ENCODE measurements at regions of chr12 and their contacts with region 1.

Region 1: DNA sequence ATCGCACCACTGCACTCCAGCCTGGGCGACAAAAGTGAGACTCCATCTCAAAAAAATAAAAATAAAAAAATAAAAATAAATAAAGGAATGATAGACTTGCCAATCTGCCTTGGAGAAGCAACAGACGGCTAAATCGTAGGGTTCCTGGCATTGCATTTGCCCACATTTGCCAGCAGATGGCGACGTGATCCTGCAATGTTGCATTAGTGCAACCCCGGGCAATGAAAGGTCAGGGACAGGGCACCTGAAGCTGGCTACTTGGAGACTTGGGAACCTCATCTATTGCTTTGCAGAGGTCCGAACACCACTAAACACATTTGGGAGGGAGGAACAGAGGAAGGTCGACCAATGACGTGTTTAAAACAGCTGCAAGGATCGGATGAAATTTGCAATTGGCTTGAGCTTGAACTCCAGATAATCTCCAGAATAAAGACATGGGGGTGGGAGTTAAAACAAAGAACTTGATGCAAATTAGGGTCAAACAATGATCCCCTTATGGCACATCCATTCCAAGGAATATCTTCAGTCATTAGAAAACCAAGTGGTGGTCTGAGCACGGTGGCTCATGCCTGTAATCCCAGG is 34.6 kb downstream of the SPRING1 start:
- DNase-seq: peak; percentile 46
- H3K4me3 ChIP-seq: no peak overlapping the region
- H3K27ac ChIP-seq: no peak overlapping the region
- H3K4me1 ChIP-seq: no peaks in the 10 kb centered on the region
- H3K27me3 ChIP-seq: no peaks in the 10 kb centered on the region
- CTCF ChIP-seq: peak; percentile 54 to 88 (median 86)
- POLR2A ChIP-seq: no peak

Region 2: DNA sequence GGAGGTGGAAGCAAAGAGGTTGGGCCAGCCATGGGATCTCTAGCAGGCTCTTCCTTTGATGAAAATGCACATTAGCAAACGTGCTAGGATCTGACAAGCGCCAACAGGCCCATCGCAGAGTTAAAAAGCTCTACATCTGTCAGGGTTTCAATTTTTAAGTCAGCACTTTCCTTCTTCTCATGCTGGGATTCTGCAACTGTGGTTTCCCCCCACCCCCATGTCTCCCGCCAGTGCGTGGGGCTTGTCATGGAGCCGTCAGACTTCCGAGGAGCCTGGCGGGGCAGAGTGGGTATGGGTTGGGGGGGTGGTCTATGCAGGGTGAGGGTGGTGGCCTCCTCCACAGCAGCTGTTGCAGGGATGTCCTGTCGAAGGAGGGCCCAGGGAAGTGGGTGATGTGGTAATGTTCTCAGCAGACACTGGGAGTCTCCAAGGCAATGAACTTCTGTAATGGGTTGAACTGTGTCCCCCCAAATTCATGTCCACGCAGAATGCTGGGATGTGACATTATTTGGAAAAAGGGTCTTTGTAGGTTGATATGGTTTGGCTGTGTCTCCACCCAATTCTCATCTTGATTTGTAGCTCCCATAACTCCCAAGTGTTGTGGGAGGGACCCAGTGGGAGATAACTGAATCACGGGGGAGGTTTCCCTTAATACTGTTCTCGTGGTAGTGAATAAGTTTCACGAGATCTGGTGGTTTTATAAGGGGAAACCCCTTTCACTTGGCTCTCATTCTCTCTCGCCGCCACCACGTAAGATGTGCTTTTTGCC is 259.3 kb before region 1 on chr12:
- intact Hi-C with region 1: no loop called
- DNase-seq: peak; percentile 25
- H3K4me3 ChIP-seq: no peak overlapping the region
- H3K27ac ChIP-seq: no peak overlapping the region
- H3K4me1 ChIP-seq: no peaks in the 10 kb centered on the region
- H3K27me3 ChIP-seq: no peaks in the 10 kb centered on the region
- CTCF ChIP-seq: no peak
- POLR2A ChIP-seq: no peak

Region 3: DNA sequence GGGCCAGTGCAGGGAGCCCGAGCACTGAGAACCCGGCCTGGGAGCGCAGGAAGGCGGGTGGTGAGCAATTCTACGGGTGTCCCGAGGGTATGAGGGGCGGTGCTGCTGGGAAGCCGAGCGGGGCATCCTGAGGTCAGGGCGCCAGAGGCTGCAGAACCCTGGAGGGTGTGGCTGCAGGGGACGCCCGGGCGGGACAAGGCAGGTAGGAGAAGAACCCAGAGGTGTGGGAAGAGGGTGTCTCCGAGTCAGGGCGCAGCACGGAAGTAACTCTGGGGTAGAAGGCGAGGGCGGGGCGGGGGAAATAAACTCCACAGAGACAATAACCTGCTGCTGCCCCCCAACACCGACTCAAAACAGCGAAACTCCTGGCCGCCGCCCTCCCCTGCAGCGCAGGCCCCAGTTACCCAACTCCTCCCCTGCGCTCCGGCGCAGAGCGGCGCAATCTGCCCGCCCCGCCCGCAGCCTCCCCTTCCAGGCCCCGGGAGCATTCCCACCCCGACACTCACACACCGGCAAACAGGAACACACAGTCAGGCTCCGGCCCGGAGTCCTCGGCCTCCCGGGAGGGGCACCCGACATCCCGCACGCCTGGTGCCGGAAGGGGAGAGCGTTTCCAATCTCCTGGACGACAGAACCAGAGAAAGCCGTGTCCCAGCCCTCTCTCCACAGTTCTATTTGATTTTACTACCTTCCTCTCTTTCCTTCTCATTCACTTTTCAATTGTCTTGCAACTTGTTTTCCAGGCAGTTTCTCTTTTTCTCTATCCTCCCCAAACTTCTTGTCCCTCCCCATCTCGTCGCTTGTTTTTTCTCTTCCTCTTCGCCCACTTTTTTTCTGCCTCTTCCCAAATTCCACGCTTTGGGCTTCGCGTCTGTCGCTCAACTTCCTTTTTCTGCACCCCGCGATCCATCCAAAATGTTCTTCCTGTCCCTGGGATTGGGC is 175.5 kb after region 1 on chr12:
- intact Hi-C with region 1: loop called (anchors 10 kb)
- DNase-seq: no peak
- H3K4me3 ChIP-seq: peak overlapping the region in 1 of 2 donors; percentile 7
- H3K27ac ChIP-seq: no peak overlapping the region
- H3K4me1 ChIP-seq: peaks cover 18% of the 10 kb centered on the region
- H3K27me3 ChIP-seq: peaks cover 41% of the 10 kb centered on the region
- CTCF ChIP-seq: no peak
- POLR2A ChIP-seq: no peak

Region 4: GRCh38 chr12:117025481-117026151 is 322.3 kb after region 1 on chr12:
- intact Hi-C with region 1: loop called (anchors 10 kb)
- DNase-seq: peak; percentile 80
- H3K4me3 ChIP-seq: no peak overlapping the region
- H3K27ac ChIP-seq: no peak overlapping the region
- H3K4me1 ChIP-seq: peaks cover 6% of the 10 kb centered on the region
- H3K27me3 ChIP-seq: no peaks in the 10 kb centered on the region
- CTCF ChIP-seq: peak; percentile 77 to 97 (median 96)
- POLR2A ChIP-seq: no peak

Region 5: GRCh38 chr12:117119592-117120198 is 416.4 kb after region 1 on chr12:
- intact Hi-C with region 1: loop called (anchors 5 kb)
- DNase-seq: no peak
- H3K4me3 ChIP-seq: no peak overlapping the region
- H3K27ac ChIP-seq: no peak overlapping the region
- H3K4me1 ChIP-seq: no peaks in the 10 kb centered on the region
- H3K27me3 ChIP-seq: no peaks in the 10 kb centered on the region
- CTCF ChIP-seq: peak in 3 of 4 experiments; percentile 68 to 72 (median 72)
- POLR2A ChIP-seq: no peak

Measured in prostate gland (tissue), 2 donors.